Panc1 (cell line): ENCODE measurements at regions of chr2 and their contacts with region 1.

Region 1: DNA sequence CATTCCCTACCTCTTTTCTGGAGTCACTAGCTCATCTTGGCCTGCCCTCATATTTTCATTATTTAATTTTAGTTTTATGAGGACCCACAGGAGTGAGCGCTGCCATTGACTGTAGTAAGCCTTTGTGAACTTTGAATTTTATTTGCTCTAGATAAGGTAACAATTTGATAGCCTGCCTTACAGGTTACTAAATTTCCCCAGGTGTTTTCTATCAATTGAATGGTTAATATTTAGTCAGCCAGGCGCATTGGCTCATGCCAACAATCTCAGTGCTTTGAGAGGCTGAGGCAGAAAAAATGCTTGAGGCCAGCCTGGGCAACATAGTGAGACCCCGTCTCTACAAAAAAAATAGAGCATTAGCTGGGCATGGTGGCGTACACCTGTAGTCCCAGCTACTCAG is 50.2 kb downstream of the DAW1 start:
- DNase-seq: no peak
- ATAC-seq: no peak
- H3K4me3 ChIP-seq: no peak overlapping the region
- H3K27ac ChIP-seq: no peak overlapping the region
- H3K4me1 ChIP-seq: no peaks in the 10 kb centered on the region
- H3K27me3 ChIP-seq: no peaks in the 10 kb centered on the region
- CTCF ChIP-seq: no peak

Region 2: DNA sequence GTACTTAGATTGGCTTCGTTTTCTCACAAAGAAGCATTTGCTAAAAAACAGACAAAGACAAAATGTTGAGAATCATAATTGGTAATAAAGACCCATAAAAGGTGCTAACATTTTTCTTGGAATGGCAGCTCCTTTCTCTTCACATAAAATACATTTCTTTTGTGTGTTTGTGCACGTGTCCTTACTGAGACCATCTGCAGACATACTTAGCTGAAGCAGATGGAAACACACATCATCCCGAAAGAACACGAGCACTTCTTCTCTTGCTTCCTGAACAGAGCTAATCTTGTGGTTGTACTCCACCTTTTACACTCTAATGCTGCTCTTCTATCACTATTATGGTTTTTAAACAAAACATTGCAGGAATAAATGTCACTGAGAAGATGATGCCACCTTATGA is 117.3 kb after region 1 on chr2:
- CTCF ChIA-PET with region 1: no interaction called
- POLR2A ChIA-PET with region 1: no interaction called
- in situ Hi-C with region 1: no loop called
- intact Hi-C with region 1: no loop called
- DNase-seq: no peak
- ATAC-seq: no peak
- H3K4me3 ChIP-seq: no peak overlapping the region
- H3K27ac ChIP-seq: no peak overlapping the region
- H3K4me1 ChIP-seq: no peaks in the 10 kb centered on the region
- H3K27me3 ChIP-seq: no peaks in the 10 kb centered on the region
- CTCF ChIP-seq: no peak

Region 3: DNA sequence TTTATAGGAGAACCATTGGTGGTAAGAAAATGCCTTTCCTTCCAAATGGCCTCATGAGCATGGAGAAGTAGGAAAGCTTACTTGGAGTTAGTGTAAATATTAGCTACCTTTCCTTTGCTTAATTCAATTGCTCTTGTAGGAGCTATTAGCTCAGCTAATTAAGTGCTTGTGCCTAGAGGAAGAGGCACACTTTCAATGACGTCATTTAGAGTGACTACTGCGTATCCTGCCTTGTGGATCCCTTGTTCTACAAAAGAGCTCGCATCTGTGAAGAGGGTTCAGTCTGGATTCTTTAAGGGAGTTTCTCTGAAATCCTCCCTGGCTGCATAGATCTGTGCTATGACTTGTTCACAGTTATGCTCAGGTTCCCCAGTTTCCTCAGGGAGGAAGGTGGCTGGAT is 382.3 kb after region 1 on chr2:
- CTCF ChIA-PET with region 1: no interaction called
- POLR2A ChIA-PET with region 1: no interaction called
- in situ Hi-C with region 1: no loop called
- intact Hi-C with region 1: loop called (anchors 10 kb)
- DNase-seq: no peak
- ATAC-seq: no peak
- H3K4me3 ChIP-seq: no peak overlapping the region
- H3K27ac ChIP-seq: no peak overlapping the region
- H3K4me1 ChIP-seq: no peaks in the 10 kb centered on the region
- H3K27me3 ChIP-seq: no peaks in the 10 kb centered on the region
- CTCF ChIP-seq: no peak